ENCODE measurements at regions of chr1 and their contacts with region 1.

Region 1: GRCh38 chr1:109090196-109091077 is at the start of gene TMEM167B:
- DNase-seq: peak; percentile 96
- H3K4me3 Mint-ChIP-seq: peak within 1 kb of the TSS; percentile 92
- H3K27ac Mint-ChIP-seq: peak within 1 kb of the TSS; percentile 97
- H3K4me1 Mint-ChIP-seq: peaks cover 23% of the 10 kb centered on the region
- H3K27me3 Mint-ChIP-seq: no peaks in the 10 kb centered on the region
- total RNA-seq, gene TMEM167B: 26.7 and 29.2 TPM in 2 replicates

Region 2: DNA sequence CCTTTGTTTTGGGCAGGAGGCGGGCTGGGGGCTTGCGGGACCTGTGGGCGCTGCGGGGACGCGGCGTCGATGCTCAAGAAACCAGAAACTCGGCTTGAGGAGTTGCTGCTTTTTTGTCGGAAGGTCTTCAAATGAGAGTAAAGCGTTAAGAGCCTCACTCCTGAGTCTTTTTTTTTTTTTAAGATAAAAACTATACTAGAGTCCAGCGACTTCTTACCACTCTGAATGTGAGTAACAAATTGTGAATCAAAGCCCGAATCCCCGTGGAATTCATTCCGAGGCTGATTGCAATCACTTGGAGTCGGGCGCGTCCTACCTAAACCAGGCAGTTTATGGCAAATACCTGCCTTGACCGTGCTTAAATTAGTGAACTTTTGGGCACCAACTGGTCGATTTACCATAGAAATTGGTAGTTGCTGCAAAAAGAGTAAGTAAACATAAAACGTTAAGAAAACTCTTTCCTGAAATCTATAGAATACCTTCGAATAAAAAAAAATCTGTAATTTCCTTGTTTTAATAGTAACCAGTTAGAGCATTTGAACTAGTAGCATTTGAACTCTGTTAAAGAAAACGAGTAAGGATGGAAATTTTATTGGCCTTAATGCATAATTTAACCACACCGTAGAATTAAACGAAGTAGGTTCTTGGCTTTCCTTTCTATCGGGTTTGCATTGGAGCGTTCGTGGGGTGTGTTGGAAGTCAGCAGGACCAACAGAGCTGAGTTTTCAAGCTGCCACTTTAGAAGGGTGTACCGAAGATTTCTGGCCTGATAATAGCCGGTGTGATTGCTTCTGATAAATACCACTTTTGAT is 212.9 kb before region 1 on chr1:
- intact Hi-C with region 1: loop called (anchors 5 kb)
- DNase-seq: peak; percentile 65
- H3K4me3 Mint-ChIP-seq: peak overlapping the region; percentile 93
- H3K27ac Mint-ChIP-seq: peak overlapping the region; percentile 54
- H3K4me1 Mint-ChIP-seq: peaks cover 23% of the 10 kb centered on the region
- H3K27me3 Mint-ChIP-seq: peaks cover 17% of the 10 kb centered on the region

Region 3: DNA sequence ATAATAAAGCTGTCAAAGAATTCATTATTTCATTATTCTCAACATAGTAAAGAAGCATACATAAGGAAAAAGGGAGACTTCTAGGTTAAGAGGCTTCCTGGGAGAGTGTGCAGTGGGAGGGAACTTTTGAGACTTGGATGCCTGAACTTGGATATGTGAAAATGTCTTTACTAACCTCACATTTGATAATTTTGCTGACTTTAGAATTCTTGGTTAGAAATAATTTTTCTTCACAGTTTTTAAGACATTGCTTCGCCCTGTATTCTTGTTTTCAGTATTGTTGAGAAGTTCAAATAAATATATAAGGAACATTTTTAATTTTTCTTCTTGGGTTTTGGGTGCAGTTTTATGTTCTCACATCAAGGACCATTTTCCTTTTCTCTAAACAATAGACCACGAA is 173.6 kb before region 1 on chr1:
- intact Hi-C with region 1: no loop called
- DNase-seq: no peak
- H3K4me3 Mint-ChIP-seq: no peak overlapping the region
- H3K27ac Mint-ChIP-seq: no peak overlapping the region
- H3K4me1 Mint-ChIP-seq: no peaks in the 10 kb centered on the region
- H3K27me3 Mint-ChIP-seq: no peaks in the 10 kb centered on the region

Region 4: DNA sequence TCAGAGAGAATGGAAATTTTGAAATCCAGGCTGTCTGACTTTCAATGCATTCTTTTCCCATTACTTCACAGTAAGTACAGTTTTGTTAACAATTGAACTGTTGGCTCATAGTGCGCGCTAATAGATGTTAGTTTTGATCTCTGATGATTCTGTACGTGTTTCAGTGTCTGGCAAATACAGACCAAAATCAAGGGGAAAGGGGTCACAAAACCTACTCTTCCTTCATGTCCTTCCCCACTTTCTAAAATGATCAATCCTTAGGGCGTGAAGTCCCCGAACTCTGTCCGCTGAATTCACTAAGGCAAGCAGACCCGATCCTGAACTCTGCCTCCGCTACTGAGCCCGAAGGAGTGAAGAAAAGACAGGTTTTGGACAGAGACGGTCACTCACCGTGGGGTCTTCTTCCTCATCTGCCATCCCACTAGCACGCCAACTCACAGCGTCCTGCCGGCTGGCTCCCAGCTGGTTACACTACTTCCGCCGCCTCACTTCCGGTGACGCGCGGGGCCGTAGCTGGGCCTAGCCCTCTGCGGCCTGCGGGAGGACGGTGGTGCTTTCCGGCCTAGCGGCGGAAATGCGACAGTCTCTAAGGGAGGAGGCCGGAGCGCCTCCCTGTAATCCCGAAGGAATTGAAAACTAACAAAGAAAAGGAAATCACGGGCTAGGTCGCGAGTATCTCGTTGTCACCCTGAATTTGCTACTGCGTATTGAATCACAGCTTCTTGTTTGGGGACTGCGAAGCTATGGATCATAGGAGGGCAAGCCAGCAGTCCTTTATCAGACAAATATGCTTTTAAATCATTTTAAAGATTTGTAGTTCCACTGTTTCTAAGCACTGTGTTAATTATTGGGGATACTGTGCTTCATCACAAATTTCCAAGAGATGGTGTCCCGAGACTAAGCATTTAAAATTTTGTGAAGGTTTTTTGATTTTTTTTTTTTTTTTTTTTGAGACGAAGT is 14.6 kb before region 1 on chr1 and contains the start of gene TAF13:
- intact Hi-C with region 1: loop called (anchors 1 kb)
- DNase-seq: peak; percentile 97
- H3K4me3 Mint-ChIP-seq: peak within 1 kb of the TSS; percentile 93
- H3K27ac Mint-ChIP-seq: peak within 1 kb of the TSS; percentile 92
- H3K4me1 Mint-ChIP-seq: peaks cover 10% of the 10 kb centered on the region
- H3K27me3 Mint-ChIP-seq: no peaks in the 10 kb centered on the region
- total RNA-seq, gene TAF13: 24.9 and 31.7 TPM in 2 replicates

Region 5: GRCh38 chr1:109213785-109214468 is 123.5 kb after region 1 on chr1 and contains the start of gene SARS1:
- intact Hi-C with region 1: loop called (anchors 5 kb)
- DNase-seq: peak; percentile 97
- H3K4me3 Mint-ChIP-seq: peak within 1 kb of the TSS; percentile 99
- H3K27ac Mint-ChIP-seq: peak within 1 kb of the TSS; percentile 96
- H3K4me1 Mint-ChIP-seq: peaks cover 25% of the 10 kb centered on the region
- H3K27me3 Mint-ChIP-seq: no peaks in the 10 kb centered on the region
- total RNA-seq, gene SARS1: 141 and 150 TPM in 2 replicates

Measured in activated CD4-positive, alpha-beta T cell treated with anti-CD3 and anti-CD28 coated beads, Interleukin-2, amount 10 ng/mL, durations not matched to agents 24 days and 14 days (primary cell).